Tibial artery (tissue), 4 donors: ENCODE measurements at regions of chr3 and their contacts with region 1.

Region 1: DNA sequence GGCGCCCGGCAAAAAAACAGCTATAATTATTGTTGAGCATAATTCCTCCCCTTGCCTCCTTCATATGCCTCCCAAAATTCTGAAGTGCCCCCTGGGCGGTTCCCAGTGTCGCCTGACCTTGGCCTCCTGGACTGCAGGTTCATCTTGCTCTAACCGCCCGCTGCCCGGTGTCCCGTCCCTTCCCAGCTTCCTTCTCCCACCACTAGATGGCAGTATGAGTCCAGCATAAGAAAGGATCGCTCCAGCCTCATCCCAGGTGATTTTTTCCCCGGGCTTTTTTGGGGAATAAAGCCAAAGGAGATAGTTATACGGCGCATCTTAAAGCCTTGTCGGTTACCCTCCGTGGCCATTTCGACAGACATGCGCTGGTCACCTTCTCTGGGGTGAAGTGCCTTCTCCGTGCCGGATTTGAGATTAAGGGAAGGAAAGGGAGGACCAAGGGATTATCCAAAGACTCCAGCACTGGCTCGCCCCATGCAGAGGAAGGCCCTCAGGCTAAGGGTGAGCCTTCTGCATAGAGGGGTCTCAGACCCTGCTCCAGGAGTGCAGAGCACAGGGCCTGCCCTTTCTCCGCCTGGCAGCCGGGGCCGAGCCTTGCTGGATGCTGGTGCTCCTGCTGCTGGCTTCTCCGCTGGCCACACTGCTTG is 45.8 kb upstream of the TRA2B start:
- DNase-seq: peak; percentile 76 to 85
- H3K4me3 ChIP-seq: no peak overlapping the region
- H3K27ac ChIP-seq: no peak overlapping the region
- H3K4me1 ChIP-seq: peaks cover 0 to 64% (median 21%) of the 10 kb centered on the region in 4 donors
- H3K27me3 ChIP-seq: no peaks in the 10 kb centered on the region
- CTCF ChIP-seq: peak; percentile 83 to 87

Region 2: DNA sequence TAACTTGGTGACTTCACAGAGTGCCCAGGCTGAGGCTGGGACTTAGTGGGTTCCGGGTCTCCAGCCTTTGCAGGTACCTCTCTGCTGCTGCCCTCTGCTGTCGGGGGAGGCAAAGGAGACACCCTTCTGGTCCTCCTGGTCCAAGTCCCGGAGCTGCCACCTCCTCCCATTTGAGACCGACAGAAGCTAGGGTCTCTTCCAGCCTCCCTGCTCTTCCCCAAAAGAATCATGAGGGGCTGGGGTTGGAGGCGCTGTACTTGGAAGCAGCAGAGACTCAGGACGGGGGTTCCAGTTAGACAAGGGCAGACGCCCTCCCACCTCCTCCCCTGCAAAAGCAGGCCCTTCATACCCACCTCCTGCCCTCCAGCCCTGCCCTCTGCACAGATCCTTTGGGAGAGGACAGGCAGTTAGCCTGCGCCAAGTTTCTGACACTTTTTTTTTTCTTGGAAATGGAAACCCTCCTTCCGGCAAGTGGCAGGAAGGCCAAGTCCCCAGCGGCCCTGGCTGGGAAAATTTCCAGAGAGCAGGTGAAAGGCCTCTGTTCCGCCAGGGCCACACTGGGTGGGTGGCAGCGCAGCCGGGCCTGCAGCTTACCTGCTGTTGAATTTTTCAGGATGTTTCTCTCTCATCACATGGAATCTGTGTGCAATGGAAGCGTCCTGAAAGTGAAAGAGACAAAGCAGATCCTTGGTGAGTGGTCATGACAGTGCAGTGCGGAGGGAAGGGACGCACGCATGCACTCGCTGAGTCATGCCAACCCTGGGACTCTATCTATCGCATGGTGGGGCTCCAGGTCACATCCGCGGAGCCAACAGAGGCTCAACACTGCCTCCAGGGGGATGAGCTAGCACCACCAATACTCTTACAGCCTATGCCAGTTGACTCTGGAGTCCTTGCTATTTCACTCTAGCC is 258.5 kb after region 1 on chr3:
- intact Hi-C with region 1: loop called (anchors 5 kb)
- DNase-seq: peak; percentile 65 to 77
- H3K4me3 ChIP-seq: peak overlapping the region; percentile 5 to 32
- H3K27ac ChIP-seq: no peak overlapping the region
- H3K4me1 ChIP-seq: peaks cover 0 to 10% (median 2%) of the 10 kb centered on the region in 4 donors
- H3K27me3 ChIP-seq: no peaks in the 10 kb centered on the region
- CTCF ChIP-seq: peak; percentile 19 to 25

Region 3: DNA sequence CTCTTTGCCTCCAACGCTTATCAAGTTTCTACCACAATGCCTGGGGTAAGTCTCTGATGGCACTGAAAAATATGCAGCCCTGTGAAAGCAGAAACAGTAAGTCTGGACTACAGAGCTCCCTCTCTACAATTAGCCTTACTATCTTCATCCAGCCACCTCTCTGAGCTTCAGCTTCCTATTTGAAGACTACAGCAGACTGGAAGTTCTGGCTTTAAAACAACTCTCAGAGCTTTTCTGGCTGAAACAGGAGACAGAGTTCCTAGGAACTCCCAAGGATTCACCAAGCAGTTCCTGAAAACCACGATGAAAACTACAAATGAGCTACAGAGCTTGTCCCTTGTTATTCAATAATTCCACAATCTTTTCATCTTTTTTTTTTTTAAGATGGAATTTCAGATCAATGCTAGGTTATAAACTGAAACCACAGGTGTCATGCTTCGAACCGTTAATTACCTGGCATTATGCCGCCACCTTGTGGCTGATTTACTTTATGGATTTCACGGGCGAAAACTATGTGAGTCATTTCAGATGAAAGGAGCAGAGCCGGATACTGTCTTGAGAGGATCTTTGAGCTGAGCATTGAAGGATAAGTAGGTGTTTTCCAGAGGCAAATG is 556.7 kb after region 1 on chr3:
- intact Hi-C with region 1: loop called (anchors 10 kb)
- DNase-seq: peak; percentile 64 to 76
- H3K4me3 ChIP-seq: peak overlapping the region; percentile 14 to 23
- H3K27ac ChIP-seq: no peak overlapping the region
- H3K4me1 ChIP-seq: peaks cover 0 to 12% (median 0%) of the 10 kb centered on the region in 4 donors
- H3K27me3 ChIP-seq: no peaks in the 10 kb centered on the region
- CTCF ChIP-seq: peak; percentile 68 to 81